Dorsolateral prefrontal cortex (tissue), 120 donors: ENCODE measurements at regions of chr6 and their contacts with region 1.

Region 1: DNA sequence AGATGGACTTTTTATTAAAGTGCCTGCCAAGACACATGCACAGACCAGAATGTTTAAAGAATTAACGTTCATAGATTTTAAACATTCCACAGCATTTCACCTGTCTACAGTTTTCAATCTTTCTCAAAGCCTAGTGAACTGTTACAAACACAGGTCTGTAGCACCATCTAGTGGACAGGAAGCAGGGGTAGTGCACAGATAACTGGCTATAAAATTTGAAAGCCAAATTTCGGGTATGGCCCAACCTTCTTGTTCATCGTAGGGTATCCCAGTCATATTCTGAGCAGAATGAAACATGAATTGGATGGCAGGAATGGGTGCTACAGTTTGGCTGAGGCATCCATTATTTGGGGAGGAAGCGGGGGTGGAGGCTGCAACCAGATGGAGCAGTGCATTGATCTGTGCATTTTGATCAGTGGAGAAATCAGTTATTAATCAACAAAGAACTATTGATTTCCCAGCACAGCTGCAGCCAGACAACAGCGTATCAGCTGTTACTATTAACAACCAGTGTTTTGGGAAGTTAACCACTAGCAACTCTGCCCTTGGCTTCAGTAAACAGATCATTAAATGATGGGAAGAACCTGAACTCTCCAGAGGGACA is 56.1 kb upstream of the B3GAT2 start:
- DNase-seq: peak in 1 of 10 donors; percentile 35
- H3K4me3 ChIP-seq: no peak overlapping the region
- H3K27ac ChIP-seq: no peak overlapping the region
- H3K27me3 ChIP-seq: peaks cover 0 to 5% (median 0%) of the 10 kb centered on the region in 45 donors
- CTCF ChIP-seq: peak; percentile 55 to 90 (median 77)

Region 2: DNA sequence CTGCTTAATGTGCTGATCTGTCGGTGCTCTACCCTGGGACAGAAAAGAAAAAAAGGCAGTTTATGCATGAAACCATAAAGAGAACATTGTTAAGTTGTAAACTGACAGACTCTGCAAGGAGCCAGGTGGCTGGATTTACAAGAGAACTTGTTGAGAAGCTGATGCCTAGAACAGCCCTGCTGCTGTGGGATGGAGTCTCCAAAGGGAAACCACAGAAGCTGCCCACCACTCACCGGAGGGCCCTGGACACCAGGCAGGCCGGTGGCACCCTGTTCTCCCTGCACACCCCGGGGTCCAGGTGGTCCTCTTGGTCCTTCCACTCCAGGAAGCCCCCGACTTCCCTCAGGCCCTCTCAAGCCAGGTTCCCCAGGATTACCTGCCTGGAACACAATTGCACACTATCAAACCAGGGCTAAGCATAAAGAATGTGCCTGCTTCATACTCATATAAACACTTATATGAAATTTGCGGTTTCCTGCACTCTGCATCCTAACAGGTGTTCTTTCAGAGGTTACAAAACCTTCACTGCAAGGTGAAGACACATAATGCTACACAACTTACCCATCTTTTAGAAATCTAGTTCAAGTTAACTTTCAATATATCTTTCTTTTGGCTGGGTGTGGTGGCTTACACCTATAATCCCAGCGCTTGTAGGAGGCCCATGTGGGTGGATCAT is 778.3 kb before region 1 on chr6:
- intact Hi-C with region 1: loop called in 1 of 2 experiments (anchors 10 kb)
- DNase-seq: no peak
- H3K4me3 ChIP-seq: no peak overlapping the region
- H3K27ac ChIP-seq: no peak overlapping the region
- H3K27me3 ChIP-seq: peaks cover 0 to 5% (median 0%) of the 10 kb centered on the region in 45 donors
- CTCF ChIP-seq: no peak

Region 3: GRCh38 chr6:70310063-70310694 is 702.8 kb before region 1 on chr6:
- intact Hi-C with region 1: loop called in 1 of 2 experiments (anchors 2 kb)
- DNase-seq: no peak
- H3K4me3 ChIP-seq: no peak overlapping the region
- H3K27ac ChIP-seq: no peak overlapping the region
- H3K27me3 ChIP-seq: peaks cover 0 to 9% (median 0%) of the 10 kb centered on the region in 45 donors
- CTCF ChIP-seq: peak; percentile 59 to 91 (median 77)